Naive thymus-derived CD4-positive, alpha-beta T cell (primary cell): ENCODE measurements at regions of chr12 and their contacts with region 1.

Region 1: DNA sequence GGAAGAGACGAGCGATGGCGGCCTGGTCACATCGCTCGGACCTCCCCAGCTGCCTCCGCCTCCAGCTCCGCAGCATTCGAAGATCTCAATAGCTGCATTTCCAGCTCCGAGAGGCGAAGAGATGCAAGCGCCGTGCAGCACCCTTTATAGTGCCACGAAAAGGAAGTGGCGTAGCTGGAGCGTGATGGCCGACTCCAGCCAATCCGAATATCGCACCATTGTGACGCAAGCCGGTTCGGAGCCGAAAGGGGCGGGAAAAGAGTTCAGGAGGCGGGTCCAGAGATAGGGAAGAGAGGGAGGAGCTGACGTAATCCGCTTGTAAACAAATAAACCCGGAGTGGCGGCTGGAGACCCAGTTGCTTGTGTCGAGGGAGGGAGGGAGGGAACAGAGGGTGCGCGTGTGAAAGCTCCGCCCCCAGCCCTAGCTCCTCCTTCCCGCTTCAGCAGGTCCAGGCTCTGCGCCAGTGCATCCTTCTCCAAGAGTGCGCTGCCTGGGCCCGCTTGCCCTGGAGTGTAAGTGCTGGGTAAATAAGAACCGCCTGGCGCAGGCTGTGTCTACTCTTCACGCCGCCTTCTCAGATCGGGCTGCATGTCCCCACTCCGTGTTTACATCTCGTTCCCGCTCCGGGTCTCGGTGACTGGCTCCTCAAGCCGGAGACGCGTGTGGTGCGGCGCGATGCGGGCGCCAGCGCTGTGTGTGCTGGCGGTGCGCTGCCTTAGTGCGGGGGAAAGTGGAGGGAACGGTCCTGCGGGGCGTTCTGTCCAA is at the start of gene BTG1:
- DNase-seq: peak; percentile 90 to 100 (median 100)
- ATAC-seq: peak; percentile 84
- H3K4me3 ChIP-seq: peak within 1 kb of the TSS; percentile 98
- H3K4me3 Mint-ChIP-seq: peak within 1 kb of the TSS; percentile 94 to 100 (median 98)
- H3K27ac ChIP-seq: peak within 1 kb of the TSS; percentile 91
- H3K27ac Mint-ChIP-seq: peak within 1 kb of the TSS; percentile 98 to 100 (median 99)
- H3K4me1 ChIP-seq: peaks cover 7 to 14% of the 10 kb centered on the region in 2 donors
- H3K4me1 Mint-ChIP-seq: peaks cover 18 to 34% (median 27%) of the 10 kb centered on the region in 7 donors
- H3K27me3 ChIP-seq: no peaks in the 10 kb centered on the region
- H3K27me3 Mint-ChIP-seq: peaks cover 0 to 4% (median 0%) of the 10 kb centered on the region in 5 donors
- total RNA-seq, gene BTG1: 188 to 1,246 (median 571) TPM

Region 2: GRCh38 chr12:91361864-91362263 is 784.0 kb before region 1 on chr12:
- CTCF ChIA-PET with region 1: no interaction called
- POLR2A ChIA-PET with region 1: no interaction called
- intact Hi-C with region 1: loop called in 1 of 2 experiments (anchors 5 kb)
- DNase-seq: peak in 7 of 9 donors; percentile 15 to 57 (median 46)
- ATAC-seq: peak; percentile 63
- H3K4me3 ChIP-seq: no peak overlapping the region
- H3K4me3 Mint-ChIP-seq: peak overlapping the region in 1 of 10 donors; percentile 11
- H3K27ac ChIP-seq: no peak overlapping the region
- H3K27ac Mint-ChIP-seq: peak overlapping the region in 1 of 9 donors; percentile 41
- H3K4me1 ChIP-seq: no peaks in the 10 kb centered on the region
- H3K4me1 Mint-ChIP-seq: peaks cover 0 to 4% (median 3%) of the 10 kb centered on the region in 7 donors
- H3K27me3 ChIP-seq: no peaks in the 10 kb centered on the region
- H3K27me3 Mint-ChIP-seq: peaks cover 0 to 16% (median 0%) of the 10 kb centered on the region in 5 donors

Region 3: DNA sequence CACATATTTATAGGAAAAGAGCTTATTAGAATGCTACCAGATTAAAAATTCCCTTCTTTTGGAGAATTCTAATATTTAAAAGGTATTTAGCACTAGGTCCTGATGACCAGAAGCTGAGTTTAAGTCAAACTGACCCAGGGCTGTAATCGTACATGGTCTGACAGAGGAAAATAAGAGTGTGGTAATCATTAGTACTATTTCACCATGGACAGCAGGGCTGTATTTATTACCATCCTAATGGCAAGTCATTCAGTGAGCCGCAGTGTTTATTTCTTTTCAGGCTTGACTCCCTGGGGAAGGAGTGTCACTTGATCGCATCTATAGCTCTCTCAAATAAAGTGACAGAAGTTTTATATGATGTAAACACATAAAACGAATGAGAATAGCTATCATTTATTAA is 262.1 kb before region 1 on chr12:
- CTCF ChIA-PET with region 1: no interaction called
- POLR2A ChIA-PET with region 1: interaction called, 193 read pairs
- intact Hi-C with region 1: no loop called
- DNase-seq: no peak
- ATAC-seq: no peak
- H3K4me3 ChIP-seq: no peak overlapping the region
- H3K4me3 Mint-ChIP-seq: no peak overlapping the region
- H3K27ac ChIP-seq: no peak overlapping the region
- H3K27ac Mint-ChIP-seq: no peak overlapping the region
- H3K4me1 ChIP-seq: peaks cover 16 to 18% of the 10 kb centered on the region in 2 donors
- H3K4me1 Mint-ChIP-seq: peaks cover 16 to 48% (median 40%) of the 10 kb centered on the region in 7 donors
- H3K27me3 ChIP-seq: no peaks in the 10 kb centered on the region
- H3K27me3 Mint-ChIP-seq: peaks cover 0 to 3% (median 0%) of the 10 kb centered on the region in 5 donors

Region 4: DNA sequence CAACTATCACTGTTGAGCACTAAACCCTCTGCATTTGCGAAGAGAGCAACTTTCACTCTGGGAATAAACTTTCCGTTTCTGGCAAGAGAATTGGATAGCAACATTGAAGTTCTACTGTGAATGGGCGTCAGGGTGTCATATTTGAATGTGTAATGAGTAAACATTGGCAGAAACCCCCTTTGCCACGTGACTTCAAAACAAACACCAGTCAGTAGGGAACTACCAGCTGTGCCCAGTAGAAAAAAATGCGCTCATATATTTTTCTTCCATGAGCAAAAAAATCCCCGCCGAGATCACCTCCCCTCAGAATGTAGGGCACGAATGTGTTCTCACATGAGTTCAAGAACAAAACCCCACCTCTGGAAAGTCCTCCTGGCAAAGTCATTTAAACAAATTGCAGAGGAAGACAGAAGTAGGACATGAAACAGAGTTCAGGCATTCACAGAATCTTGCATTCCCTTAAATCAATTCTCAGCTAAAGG is 80.9 kb before region 1 on chr12:
- CTCF ChIA-PET with region 1: no interaction called
- POLR2A ChIA-PET with region 1: interaction called, 18 read pairs
- intact Hi-C with region 1: no loop called
- DNase-seq: peak in 2 of 9 donors; percentile 42 to 74
- ATAC-seq: peak; percentile 84
- H3K4me3 ChIP-seq: no peak overlapping the region
- H3K4me3 Mint-ChIP-seq: peak overlapping the region in 7 of 10 donors; percentile 3 to 58 (median 37)
- H3K27ac ChIP-seq: no peak overlapping the region
- H3K27ac Mint-ChIP-seq: peak overlapping the region in 6 of 9 donors; percentile 27 to 88 (median 52)
- H3K4me1 ChIP-seq: peaks cover 5 to 30% of the 10 kb centered on the region in 2 donors
- H3K4me1 Mint-ChIP-seq: peaks cover 18 to 75% (median 62%) of the 10 kb centered on the region in 7 donors
- H3K27me3 ChIP-seq: no peaks in the 10 kb centered on the region
- H3K27me3 Mint-ChIP-seq: no peaks in the 10 kb centered on the region

Region 5: GRCh38 chr12:92234533-92234932 is 88.6 kb after region 1 on chr12:
- CTCF ChIA-PET with region 1: no interaction called
- POLR2A ChIA-PET with region 1: interaction called, 45 read pairs
- intact Hi-C with region 1: loop called in 1 of 2 experiments (anchors 1 kb)
- DNase-seq: peak in 6 of 9 donors; percentile 19 to 60 (median 42)
- ATAC-seq: peak; percentile 52
- H3K4me3 ChIP-seq: no peak overlapping the region
- H3K4me3 Mint-ChIP-seq: peak overlapping the region in 9 of 10 donors; percentile 13 to 78 (median 65)
- H3K27ac ChIP-seq: no peak overlapping the region
- H3K27ac Mint-ChIP-seq: peak overlapping the region in 8 of 9 donors; percentile 51 to 92 (median 84)
- H3K4me1 ChIP-seq: peaks cover 0 to 22% of the 10 kb centered on the region in 2 donors
- H3K4me1 Mint-ChIP-seq: peaks cover 6 to 48% (median 38%) of the 10 kb centered on the region in 7 donors
- H3K27me3 ChIP-seq: no peaks in the 10 kb centered on the region
- H3K27me3 Mint-ChIP-seq: no peaks in the 10 kb centered on the region

Region 6: GRCh38 chr12:92369643-92370042 is 223.7 kb after region 1 on chr12:
- CTCF ChIA-PET with region 1: no interaction called
- POLR2A ChIA-PET with region 1: interaction called, 140 read pairs
- intact Hi-C with region 1: no loop called
- DNase-seq: no peak
- ATAC-seq: no peak
- H3K4me3 ChIP-seq: no peak overlapping the region
- H3K4me3 Mint-ChIP-seq: no peak overlapping the region
- H3K27ac ChIP-seq: no peak overlapping the region
- H3K27ac Mint-ChIP-seq: peak overlapping the region in 1 of 9 donors; percentile 5
- H3K4me1 ChIP-seq: peaks cover 0 to 10% of the 10 kb centered on the region in 2 donors
- H3K4me1 Mint-ChIP-seq: peaks cover 6 to 65% (median 55%) of the 10 kb centered on the region in 7 donors
- H3K27me3 ChIP-seq: no peaks in the 10 kb centered on the region
- H3K27me3 Mint-ChIP-seq: no peaks in the 10 kb centered on the region

Region 7: GRCh38 chr12:92469837-92470236 is 323.9 kb after region 1 on chr12:
- CTCF ChIA-PET with region 1: no interaction called
- POLR2A ChIA-PET with region 1: no interaction called
- intact Hi-C with region 1: no loop called
- DNase-seq: no peak
- ATAC-seq: no peak
- H3K4me3 ChIP-seq: no peak overlapping the region
- H3K4me3 Mint-ChIP-seq: no peak overlapping the region
- H3K27ac ChIP-seq: no peak overlapping the region
- H3K27ac Mint-ChIP-seq: no peak overlapping the region
- H3K4me1 ChIP-seq: no peaks in the 10 kb centered on the region
- H3K4me1 Mint-ChIP-seq: peaks cover 4 to 22% (median 9%) of the 10 kb centered on the region in 7 donors
- H3K27me3 ChIP-seq: no peaks in the 10 kb centered on the region
- H3K27me3 Mint-ChIP-seq: no peaks in the 10 kb centered on the region

Region 8: GRCh38 chr12:92649511-92650227 is 503.8 kb after region 1 on chr12:
- CTCF ChIA-PET with region 1: interaction called, 4 read pairs
- POLR2A ChIA-PET with region 1: interaction called, 17 read pairs
- intact Hi-C with region 1: loop called (anchors 1 to 2 kb)
- DNase-seq: peak; percentile 8 to 70 (median 58)
- ATAC-seq: peak; percentile 96
- H3K4me3 ChIP-seq: no peak overlapping the region
- H3K4me3 Mint-ChIP-seq: peak overlapping the region in 1 of 10 donors; percentile 21
- H3K27ac ChIP-seq: no peak overlapping the region
- H3K27ac Mint-ChIP-seq: peak overlapping the region in 6 of 9 donors; percentile 7 to 79 (median 20)
- H3K4me1 ChIP-seq: no peaks in the 10 kb centered on the region
- H3K4me1 Mint-ChIP-seq: peaks cover 4 to 11% (median 6%) of the 10 kb centered on the region in 7 donors
- H3K27me3 ChIP-seq: no peaks in the 10 kb centered on the region
- H3K27me3 Mint-ChIP-seq: no peaks in the 10 kb centered on the region